Activated B cell treated with CpG ODN at 0.5 μM for 24 hours (primary cell): ENCODE measurements at regions of chr15 and their contacts with region 1.

Region 1: GRCh38 chr15:40323239-40323952 is at the start of gene INAFM2:
- DNase-seq: peak; percentile 88
- ATAC-seq: peak; percentile 92
- H3K4me3 Mint-ChIP-seq: peak within 1 kb of the TSS; percentile 80
- H3K27ac Mint-ChIP-seq: peak within 1 kb of the TSS; percentile 65
- H3K4me1 Mint-ChIP-seq: peaks cover 29% of the 10 kb centered on the region
- H3K27me3 Mint-ChIP-seq: no peaks in the 10 kb centered on the region
- CTCF ChIP-seq: no peak
- total RNA-seq, gene INAFM2: 9.5 TPM in 2 replicates

Region 2: GRCh38 chr15:39934397-39935071 is 388.9 kb before region 1 on chr15:
- CTCF ChIA-PET with region 1: no interaction called
- POLR2A ChIA-PET with region 1: no interaction called
- intact Hi-C with region 1: loop called (anchors 1 kb)
- DNase-seq: no peak
- ATAC-seq: no peak
- H3K4me3 Mint-ChIP-seq: peak overlapping the region; percentile 96
- H3K27ac Mint-ChIP-seq: peak overlapping the region; percentile 50
- H3K4me1 Mint-ChIP-seq: peaks cover 32% of the 10 kb centered on the region
- H3K27me3 Mint-ChIP-seq: peaks cover 5% of the 10 kb centered on the region
- CTCF ChIP-seq: no peak

Region 3: DNA sequence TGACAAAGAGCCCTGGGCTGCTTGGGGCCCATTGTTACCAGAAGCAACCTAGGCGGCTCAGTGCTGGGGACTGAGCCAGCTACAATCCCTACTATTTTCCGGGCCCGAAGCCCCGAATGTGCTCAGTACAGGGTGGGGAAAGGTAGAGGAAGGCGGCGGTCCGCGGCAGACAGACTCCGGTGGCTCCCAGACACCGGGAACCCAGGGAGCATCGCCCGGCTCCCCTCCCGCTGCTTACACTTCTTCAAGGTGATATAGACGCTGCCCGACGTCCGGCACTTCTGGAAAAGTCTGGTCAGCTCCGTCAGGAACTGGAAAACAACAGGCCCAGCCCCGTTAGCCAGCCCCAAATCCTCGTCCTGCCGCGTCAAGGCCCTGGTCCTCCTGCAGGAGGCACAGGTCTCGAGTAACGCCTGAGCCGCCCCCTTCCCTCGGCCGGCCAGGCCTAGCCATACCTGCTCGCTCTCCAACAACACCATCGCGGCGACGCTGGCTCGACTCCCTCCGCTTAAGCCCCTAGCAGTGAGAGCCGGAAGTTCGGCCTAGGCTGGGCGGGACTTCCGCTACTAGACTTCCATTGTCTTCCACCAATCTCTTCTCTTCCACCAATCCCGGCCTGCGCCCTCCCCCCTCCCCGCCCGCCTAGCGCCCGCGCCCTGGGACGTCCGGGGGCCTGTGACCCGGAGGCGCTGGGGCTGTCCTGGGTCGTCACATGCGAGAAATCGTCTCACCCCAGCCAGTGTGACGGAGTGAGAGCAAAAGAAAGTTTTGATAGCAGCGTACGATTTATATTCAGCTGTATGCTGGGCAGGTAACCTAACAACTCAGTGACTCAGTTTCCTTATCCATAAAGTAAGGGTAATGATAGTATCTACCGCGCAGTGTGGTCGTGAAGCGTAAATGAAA is 284.5 kb before region 1 on chr15 and contains the start of gene SRP14:
- CTCF ChIA-PET with region 1: no interaction called
- POLR2A ChIA-PET with region 1: interaction called, 3 read pairs
- intact Hi-C with region 1: loop called (anchors 5 kb)
- DNase-seq: peak; percentile 89
- ATAC-seq: peak; percentile 97
- H3K4me3 Mint-ChIP-seq: peak within 1 kb of the TSS; percentile 99
- H3K27ac Mint-ChIP-seq: peak within 1 kb of the TSS; percentile 95
- H3K4me1 Mint-ChIP-seq: peaks cover 30% of the 10 kb centered on the region
- H3K27me3 Mint-ChIP-seq: no peaks in the 10 kb centered on the region
- CTCF ChIP-seq: no peak
- total RNA-seq, gene SRP14: 183 and 217 TPM in 2 replicates

Region 4: GRCh38 chr15:40160689-40161688 is 162.4 kb before region 1 on chr15 and contains the start of gene BUB1B:
- CTCF ChIA-PET with region 1: no interaction called
- POLR2A ChIA-PET with region 1: no interaction called
- intact Hi-C with region 1: loop called (anchors 2 kb)
- DNase-seq: peak; percentile 88
- ATAC-seq: peak; percentile 97
- H3K4me3 Mint-ChIP-seq: no peak within 1 kb of the TSS
- H3K27ac Mint-ChIP-seq: no peak within 1 kb of the TSS
- H3K4me1 Mint-ChIP-seq: peaks cover 10% of the 10 kb centered on the region
- H3K27me3 Mint-ChIP-seq: no peaks in the 10 kb centered on the region
- CTCF ChIP-seq: no peak
- total RNA-seq, gene BUB1B: 3.9 and 4.2 TPM in 2 replicates

Region 5: GRCh38 chr15:40338041-40338657 is 14.8 kb after region 1 on chr15:
- CTCF ChIA-PET with region 1: interaction called, 310 read pairs
- POLR2A ChIA-PET with region 1: interaction called, 17 read pairs
- intact Hi-C with region 1: loop called (anchors 1 kb)
- DNase-seq: peak; percentile 67
- ATAC-seq: peak; percentile 96
- H3K4me3 Mint-ChIP-seq: no peak overlapping the region
- H3K27ac Mint-ChIP-seq: no peak overlapping the region
- H3K4me1 Mint-ChIP-seq: peaks cover 24% of the 10 kb centered on the region
- H3K27me3 Mint-ChIP-seq: no peaks in the 10 kb centered on the region
- CTCF ChIP-seq: peak; percentile 17

Region 6: DNA sequence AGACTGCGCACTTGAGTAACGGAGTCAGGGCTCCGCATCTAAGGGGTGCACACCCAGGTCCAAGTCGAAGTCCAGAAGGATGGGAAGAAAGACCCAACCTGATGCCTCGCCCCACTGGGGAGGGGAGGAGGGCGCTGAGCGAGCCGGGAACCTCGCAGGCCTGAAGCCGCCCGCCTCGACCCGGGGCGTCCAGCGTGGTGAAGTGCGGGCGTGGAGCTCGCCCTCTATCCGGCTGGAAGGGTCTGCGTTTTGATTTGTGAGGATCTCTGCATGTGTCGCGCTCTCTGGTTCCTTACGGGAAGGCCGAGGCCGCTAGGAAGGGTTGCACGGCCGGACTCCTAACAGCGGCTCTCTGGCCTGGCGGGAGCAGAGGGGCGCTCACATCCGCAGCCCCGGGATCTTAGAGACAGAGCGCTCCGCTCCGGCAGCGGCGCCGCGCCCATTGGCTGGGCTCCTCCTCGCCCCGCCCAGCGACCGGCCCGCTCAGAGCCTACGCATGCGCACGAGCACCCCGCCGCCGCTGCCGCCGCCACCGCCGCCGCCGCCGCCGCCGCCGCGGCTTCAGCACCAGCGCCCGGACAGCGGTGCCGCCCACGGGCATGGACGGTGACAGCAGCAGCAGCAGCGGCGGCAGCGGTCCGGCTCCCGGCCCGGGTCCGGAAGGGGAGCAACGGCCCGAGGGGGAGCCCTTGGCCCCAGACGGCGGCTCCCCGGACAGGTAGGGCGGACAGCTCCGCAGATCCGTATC is 34.5 kb after region 1 on chr15 and contains the start of gene DISP2:
- CTCF ChIA-PET with region 1: interaction called, 3 read pairs
- POLR2A ChIA-PET with region 1: interaction called, 3 read pairs
- intact Hi-C with region 1: loop called (anchors 1 kb)
- DNase-seq: peak; percentile 93
- ATAC-seq: peak; percentile 94
- H3K4me3 Mint-ChIP-seq: peak within 1 kb of the TSS; percentile 87
- H3K27ac Mint-ChIP-seq: no peak within 1 kb of the TSS
- H3K4me1 Mint-ChIP-seq: peaks cover 8% of the 10 kb centered on the region
- H3K27me3 Mint-ChIP-seq: no peaks in the 10 kb centered on the region
- CTCF ChIP-seq: no peak
- total RNA-seq, gene DISP2: 0.38 and 0.39 TPM in 2 replicates

Region 7: DNA sequence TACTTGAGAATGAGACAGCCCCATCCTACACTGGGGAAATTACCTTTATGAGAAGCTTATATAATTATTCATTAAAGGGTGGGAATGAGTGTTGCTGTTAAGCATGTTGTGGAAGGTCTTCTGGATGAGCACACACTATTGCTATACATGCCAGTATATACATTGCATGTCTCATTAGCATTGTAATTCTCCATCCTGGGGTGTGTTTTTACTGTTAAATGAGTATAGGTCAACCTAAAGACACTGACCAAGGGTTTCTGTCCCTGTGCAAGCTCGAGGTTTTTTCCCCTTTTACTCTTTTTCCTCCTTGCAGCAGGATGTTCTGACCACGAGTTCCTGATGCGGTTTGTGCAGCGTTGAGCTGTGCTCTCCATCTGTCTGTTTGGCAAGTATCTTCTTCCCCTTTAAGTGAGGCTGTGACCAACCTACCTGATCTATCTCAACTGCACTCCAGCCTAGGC is 75.0 kb after region 1 on chr15:
- CTCF ChIA-PET with region 1: no interaction called
- POLR2A ChIA-PET with region 1: no interaction called
- intact Hi-C with region 1: no loop called
- DNase-seq: no peak
- ATAC-seq: peak; percentile 86
- H3K4me3 Mint-ChIP-seq: peak overlapping the region; percentile 42
- H3K27ac Mint-ChIP-seq: peak overlapping the region; percentile 38
- H3K4me1 Mint-ChIP-seq: peaks cover 18% of the 10 kb centered on the region
- H3K27me3 Mint-ChIP-seq: no peaks in the 10 kb centered on the region
- CTCF ChIP-seq: no peak

Region 8: GRCh38 chr15:40477642-40478327 is 154.4 kb after region 1 on chr15:
- CTCF ChIA-PET with region 1: no interaction called
- POLR2A ChIA-PET with region 1: no interaction called
- intact Hi-C with region 1: no loop called
- DNase-seq: no peak
- ATAC-seq: no peak
- H3K4me3 Mint-ChIP-seq: no peak overlapping the region
- H3K27ac Mint-ChIP-seq: no peak overlapping the region
- H3K4me1 Mint-ChIP-seq: peaks cover 2% of the 10 kb centered on the region
- H3K27me3 Mint-ChIP-seq: peaks cover 4% of the 10 kb centered on the region
- CTCF ChIP-seq: no peak